CD4-positive, alpha-beta memory T cell (primary cell): ENCODE measurements at regions of chrX and their contacts with region 1.

Region 1: GRCh38 chrX:52995135-52996020 is 37.1 kb upstream of the FAM156A start:
- DNase-seq: peak; percentile 90 to 94 (median 93)
- H3K4me3 ChIP-seq: peak overlapping the region; percentile 81 to 89
- H3K4me3 Mint-ChIP-seq: peak overlapping the region; percentile 89 to 99 (median 94)
- H3K27ac ChIP-seq: peak overlapping the region; percentile 77
- H3K27ac Mint-ChIP-seq: peak overlapping the region; percentile 95 to 100 (median 99)
- H3K4me1 ChIP-seq: peaks cover 18% of the 10 kb centered on the region
- H3K4me1 Mint-ChIP-seq: peaks cover 9 to 28% (median 16%) of the 10 kb centered on the region in 4 donors
- H3K27me3 ChIP-seq: no peaks in the 10 kb centered on the region
- H3K27me3 Mint-ChIP-seq: peaks cover 0 to 1% of the 10 kb centered on the region in 2 donors

Region 2: GRCh38 chrX:51614353-51615012 is 1380.9 kb before region 1 on chrX:
- CTCF ChIA-PET with region 1: no interaction called
- POLR2A ChIA-PET with region 1: no interaction called
- intact Hi-C with region 1: loop called (anchors 5 kb)
- DNase-seq: peak in 4 of 5 donors; percentile 7 to 19 (median 12)
- H3K4me3 ChIP-seq: no peak overlapping the region
- H3K4me3 Mint-ChIP-seq: no peak overlapping the region
- H3K27ac ChIP-seq: no peak overlapping the region
- H3K27ac Mint-ChIP-seq: no peak overlapping the region
- H3K4me1 ChIP-seq: no peaks in the 10 kb centered on the region
- H3K4me1 Mint-ChIP-seq: peaks cover 0 to 5% (median 3%) of the 10 kb centered on the region in 4 donors
- H3K27me3 ChIP-seq: no peaks in the 10 kb centered on the region
- H3K27me3 Mint-ChIP-seq: peaks cover 14 to 28% of the 10 kb centered on the region in 2 donors

Region 3: GRCh38 chrX:52346512-52347194 is 648.7 kb before region 1 on chrX:
- CTCF ChIA-PET with region 1: no interaction called
- POLR2A ChIA-PET with region 1: no interaction called
- intact Hi-C with region 1: loop called (anchors 5 kb)
- DNase-seq: no peak
- H3K4me3 ChIP-seq: no peak overlapping the region
- H3K4me3 Mint-ChIP-seq: no peak overlapping the region
- H3K27ac ChIP-seq: no peak overlapping the region
- H3K27ac Mint-ChIP-seq: no peak overlapping the region
- H3K4me1 ChIP-seq: no peaks in the 10 kb centered on the region
- H3K4me1 Mint-ChIP-seq: peaks cover 0 to 1% (median 0%) of the 10 kb centered on the region in 4 donors
- H3K27me3 ChIP-seq: no peaks in the 10 kb centered on the region
- H3K27me3 Mint-ChIP-seq: no peaks in the 10 kb centered on the region

Region 4: GRCh38 chrX:52574416-52575275 is 420.7 kb before region 1 on chrX:
- CTCF ChIA-PET with region 1: interaction called, 6 read pairs
- POLR2A ChIA-PET with region 1: interaction called, 3 read pairs
- intact Hi-C with region 1: loop called (anchors 2 kb)
- DNase-seq: peak in 4 of 5 donors; percentile 26 to 43 (median 30)
- H3K4me3 ChIP-seq: no peak overlapping the region
- H3K4me3 Mint-ChIP-seq: no peak overlapping the region
- H3K27ac ChIP-seq: no peak overlapping the region
- H3K27ac Mint-ChIP-seq: peak overlapping the region in 1 of 7 donors; percentile 66
- H3K4me1 ChIP-seq: no peaks in the 10 kb centered on the region
- H3K4me1 Mint-ChIP-seq: peaks cover 0 to 4% (median 2%) of the 10 kb centered on the region in 4 donors
- H3K27me3 ChIP-seq: no peaks in the 10 kb centered on the region
- H3K27me3 Mint-ChIP-seq: no peaks in the 10 kb centered on the region

Region 5: GRCh38 chrX:52839134-52839533 is 156.2 kb before region 1 on chrX:
- CTCF ChIA-PET with region 1: no interaction called
- POLR2A ChIA-PET with region 1: no interaction called
- intact Hi-C with region 1: no loop called
- DNase-seq: no peak
- H3K4me3 ChIP-seq: no peak overlapping the region
- H3K4me3 Mint-ChIP-seq: no peak overlapping the region
- H3K27ac ChIP-seq: no peak overlapping the region
- H3K27ac Mint-ChIP-seq: no peak overlapping the region
- H3K4me1 ChIP-seq: no peaks in the 10 kb centered on the region
- H3K4me1 Mint-ChIP-seq: no peaks in the 10 kb centered on the region
- H3K27me3 ChIP-seq: no peaks in the 10 kb centered on the region
- H3K27me3 Mint-ChIP-seq: peaks cover 0 to 2% of the 10 kb centered on the region in 2 donors

Region 6: DNA sequence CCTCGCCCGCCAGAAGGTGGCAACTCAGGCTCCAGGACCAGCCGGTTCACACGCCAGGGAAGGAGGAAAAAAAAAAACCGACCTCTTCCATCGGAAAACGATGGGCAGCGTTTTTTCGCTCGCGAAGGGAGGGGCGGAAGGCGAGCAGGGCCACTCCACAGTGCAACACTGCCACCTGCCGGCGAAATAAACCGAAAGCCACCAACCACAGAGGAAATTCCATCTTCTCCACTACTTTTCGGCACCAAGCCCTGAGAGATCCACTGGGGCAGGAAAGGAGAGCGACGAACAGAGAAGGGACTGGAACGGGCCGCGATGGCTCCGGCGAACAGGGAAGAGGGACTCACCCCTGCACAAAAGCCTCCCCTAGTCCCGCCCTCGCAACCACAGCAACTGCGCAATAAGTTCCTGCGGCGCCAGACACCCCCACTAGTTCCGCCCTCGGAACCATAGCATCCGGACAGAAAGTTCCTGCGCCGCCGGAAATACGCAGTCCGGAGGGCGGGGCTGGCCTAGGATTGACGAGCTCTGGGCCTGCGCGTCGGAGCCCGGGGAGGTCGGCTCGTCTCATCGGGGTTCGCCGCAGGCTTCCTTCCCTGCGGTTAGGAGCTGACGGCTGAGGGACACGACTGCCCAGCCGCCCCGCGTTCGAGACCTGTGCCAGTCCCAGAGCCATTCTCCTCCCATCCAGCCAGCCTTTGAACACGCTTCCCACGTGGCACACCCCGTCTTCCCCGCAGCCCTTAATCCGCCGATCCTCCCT is 60.5 kb before region 1 on chrX:
- CTCF ChIA-PET with region 1: no interaction called
- POLR2A ChIA-PET with region 1: interaction called, 12 read pairs
- intact Hi-C with region 1: no loop called
- DNase-seq: peak; percentile 92 to 96 (median 96)
- H3K4me3 ChIP-seq: peak overlapping the region; percentile 43 to 61
- H3K4me3 Mint-ChIP-seq: peak overlapping the region; percentile 89 to 97 (median 94)
- H3K27ac ChIP-seq: peak overlapping the region; percentile 86
- H3K27ac Mint-ChIP-seq: peak overlapping the region; percentile 94 to 100 (median 98)
- H3K4me1 ChIP-seq: peaks cover 5% of the 10 kb centered on the region
- H3K4me1 Mint-ChIP-seq: peaks cover 8 to 19% (median 12%) of the 10 kb centered on the region in 4 donors
- H3K27me3 ChIP-seq: no peaks in the 10 kb centered on the region
- H3K27me3 Mint-ChIP-seq: peaks cover 0 to 2% of the 10 kb centered on the region in 2 donors

Region 7: DNA sequence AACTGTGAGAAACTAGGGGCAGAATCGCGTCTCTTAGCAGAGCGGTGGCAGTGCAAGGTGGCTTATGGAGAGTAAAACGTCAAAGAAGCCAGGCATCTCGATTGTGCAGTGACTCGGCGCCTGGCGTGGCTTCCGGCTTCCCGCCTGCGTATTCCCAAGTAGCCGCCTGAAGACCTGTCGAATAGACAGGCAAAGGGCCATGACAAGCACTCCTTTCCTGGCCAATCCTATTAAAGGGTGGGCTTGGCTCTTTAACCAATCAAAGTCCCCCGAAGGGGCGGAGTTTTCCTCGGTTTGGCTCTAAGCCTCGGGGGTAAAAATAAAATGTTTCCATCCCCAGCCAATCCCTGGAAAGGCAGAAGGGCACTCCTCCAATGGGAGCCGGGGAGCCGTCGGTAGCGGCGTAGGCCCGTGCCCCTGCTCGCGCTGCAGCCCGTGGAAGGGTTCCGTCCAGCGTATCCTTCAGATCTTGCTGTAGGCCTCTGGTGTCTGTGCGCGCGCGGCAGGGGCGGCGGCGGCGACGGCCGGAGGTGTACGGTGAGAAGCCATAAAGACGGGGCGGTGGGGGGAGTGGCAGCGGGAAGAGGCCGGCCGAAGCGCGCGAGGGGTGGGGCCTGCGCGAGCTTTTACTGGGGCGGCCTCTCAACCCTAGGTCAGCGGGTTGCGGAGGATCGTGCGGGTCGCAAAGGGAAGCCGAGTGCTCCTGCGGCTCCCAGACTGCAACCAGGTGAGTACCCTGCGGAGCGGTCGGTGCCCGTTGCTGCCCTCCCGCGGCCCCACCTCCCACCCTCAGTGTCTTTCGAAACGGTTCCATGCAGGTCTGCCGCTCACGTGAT is 98.6 kb after region 1 on chrX and contains the start of gene KANTR:
- CTCF ChIA-PET with region 1: no interaction called
- POLR2A ChIA-PET with region 1: interaction called, 6 read pairs
- intact Hi-C with region 1: loop called (anchors 2 kb)
- DNase-seq: peak; percentile 83 to 92 (median 84)
- H3K4me3 ChIP-seq: peak within 1 kb of the TSS; percentile 29 to 58
- H3K4me3 Mint-ChIP-seq: peak within 1 kb of the TSS; percentile 84 to 93 (median 89)
- H3K27ac ChIP-seq: peak within 1 kb of the TSS; percentile 55
- H3K27ac Mint-ChIP-seq: peak within 1 kb of the TSS; percentile 87 to 92 (median 91)
- H3K4me1 ChIP-seq: peaks cover 9% of the 10 kb centered on the region
- H3K4me1 Mint-ChIP-seq: peaks cover 7 to 35% (median 19%) of the 10 kb centered on the region in 4 donors
- H3K27me3 ChIP-seq: no peaks in the 10 kb centered on the region
- H3K27me3 Mint-ChIP-seq: no peaks in the 10 kb centered on the region
- total RNA-seq, gene KANTR: 19.9 to 23.4 TPM

Region 8: GRCh38 chrX:53644751-53645150 is 649.4 kb after region 1 on chrX:
- CTCF ChIA-PET with region 1: no interaction called
- POLR2A ChIA-PET with region 1: no interaction called
- intact Hi-C with region 1: no loop called
- DNase-seq: no peak
- H3K4me3 ChIP-seq: no peak overlapping the region
- H3K4me3 Mint-ChIP-seq: no peak overlapping the region
- H3K27ac ChIP-seq: no peak overlapping the region
- H3K27ac Mint-ChIP-seq: peak overlapping the region in 1 of 7 donors; percentile 9
- H3K4me1 ChIP-seq: no peaks in the 10 kb centered on the region
- H3K4me1 Mint-ChIP-seq: peaks cover 0 to 5% (median 3%) of the 10 kb centered on the region in 4 donors
- H3K27me3 ChIP-seq: no peaks in the 10 kb centered on the region
- H3K27me3 Mint-ChIP-seq: no peaks in the 10 kb centered on the region